Transverse colon (tissue), 4 donors: ENCODE measurements at regions of chrX and their contacts with region 1.

Region 1: DNA sequence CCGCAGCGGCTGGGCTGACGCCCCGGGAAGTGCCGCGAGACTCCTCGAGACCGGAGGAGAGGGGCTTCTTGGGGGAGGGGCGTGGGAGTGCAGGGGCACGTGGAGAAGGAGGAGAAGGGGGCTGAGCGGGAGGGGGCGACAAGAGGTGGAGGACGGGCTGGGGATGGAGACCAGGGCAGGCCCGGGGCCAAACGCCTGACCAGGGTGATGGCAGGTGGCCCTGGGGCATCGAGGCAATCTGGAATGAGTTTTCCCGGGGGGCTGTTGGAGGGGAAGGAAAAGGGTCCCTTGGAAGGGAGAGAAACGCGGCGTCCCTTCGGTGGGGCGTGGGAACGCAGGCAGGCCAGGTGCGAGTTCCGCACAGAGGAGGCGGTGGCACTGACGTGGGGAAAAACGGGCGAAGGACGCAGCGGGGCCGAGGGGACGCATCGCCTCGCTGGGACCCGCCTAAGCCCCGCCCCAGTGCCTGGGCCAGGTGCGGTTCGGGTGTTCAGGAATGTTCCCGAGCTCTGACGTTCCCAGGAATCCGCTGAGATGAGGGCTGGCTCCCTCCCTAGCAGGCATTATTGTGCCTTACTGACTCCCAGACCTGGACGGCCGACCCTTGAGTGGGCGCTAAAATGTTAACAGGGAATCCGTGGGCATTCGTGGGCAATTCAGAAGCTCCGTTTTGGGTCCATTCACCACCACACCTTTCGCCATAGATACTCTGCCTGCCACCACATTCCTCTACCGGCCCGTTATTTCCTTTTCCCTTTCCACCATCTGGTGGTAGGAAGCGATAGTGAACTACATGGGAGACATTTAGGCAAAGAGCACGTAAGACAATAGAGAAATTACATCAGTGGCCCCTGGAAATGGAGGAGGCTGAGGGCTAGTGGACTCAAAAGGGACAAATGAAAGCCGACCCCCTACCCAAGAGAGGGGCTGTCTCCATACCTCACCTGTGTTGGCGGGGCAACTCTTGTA is 795 bp upstream of the SH3KBP1 start:
- DNase-seq: peak; percentile 65
- H3K4me3 ChIP-seq: peak overlapping the region; percentile 39 to 92 (median 68)
- H3K27ac ChIP-seq: peak overlapping the region; percentile 67 to 78 (median 76)
- H3K4me1 ChIP-seq: peaks cover 0 to 4% (median 0%) of the 10 kb centered on the region in 4 donors
- H3K27me3 ChIP-seq: no peaks in the 10 kb centered on the region
- CTCF ChIP-seq: peak; percentile 43 to 73 (median 46)
- EP300 ChIP-seq: no peak
- POLR2A ChIP-seq: no peak

Region 2: GRCh38 chrX:19544693-19545305 is 343.4 kb before region 1 on chrX:
- in situ Hi-C with region 1: no loop called
- intact Hi-C with region 1: loop called (anchors 10 kb)
- DNase-seq: peak; percentile 43
- H3K4me3 ChIP-seq: no peak overlapping the region
- H3K27ac ChIP-seq: no peak overlapping the region
- H3K4me1 ChIP-seq: no peaks in the 10 kb centered on the region
- H3K27me3 ChIP-seq: no peaks in the 10 kb centered on the region
- CTCF ChIP-seq: peak; percentile 44 to 72 (median 56)
- EP300 ChIP-seq: no peak
- POLR2A ChIP-seq: no peak

Region 3: DNA sequence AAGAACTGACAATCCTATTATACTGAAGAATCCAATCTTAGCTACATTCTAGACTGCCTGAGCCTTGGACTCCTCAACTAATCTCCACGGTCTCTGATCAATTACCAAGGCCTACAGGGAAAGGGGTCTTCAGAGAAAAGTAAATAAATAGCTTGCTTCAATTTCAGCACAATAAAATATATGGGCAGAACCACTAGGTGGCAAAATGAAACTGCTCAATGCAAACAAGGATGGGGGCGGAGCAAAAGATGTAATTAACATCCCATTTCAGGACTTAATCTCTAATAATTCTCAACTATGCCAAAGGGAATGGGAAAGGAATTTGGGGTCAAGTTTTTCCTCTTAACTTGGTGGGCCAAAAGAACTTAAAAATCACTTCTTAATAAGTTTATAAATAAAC is 294.5 kb before region 1 on chrX:
- in situ Hi-C with region 1: loop called (anchors 25 kb)
- intact Hi-C with region 1: no loop called
- DNase-seq: no peak
- H3K4me3 ChIP-seq: no peak overlapping the region
- H3K27ac ChIP-seq: no peak overlapping the region
- H3K4me1 ChIP-seq: no peaks in the 10 kb centered on the region
- H3K27me3 ChIP-seq: no peaks in the 10 kb centered on the region
- CTCF ChIP-seq: peak; percentile 28 to 56 (median 34)
- EP300 ChIP-seq: no peak
- POLR2A ChIP-seq: no peak

Region 4: DNA sequence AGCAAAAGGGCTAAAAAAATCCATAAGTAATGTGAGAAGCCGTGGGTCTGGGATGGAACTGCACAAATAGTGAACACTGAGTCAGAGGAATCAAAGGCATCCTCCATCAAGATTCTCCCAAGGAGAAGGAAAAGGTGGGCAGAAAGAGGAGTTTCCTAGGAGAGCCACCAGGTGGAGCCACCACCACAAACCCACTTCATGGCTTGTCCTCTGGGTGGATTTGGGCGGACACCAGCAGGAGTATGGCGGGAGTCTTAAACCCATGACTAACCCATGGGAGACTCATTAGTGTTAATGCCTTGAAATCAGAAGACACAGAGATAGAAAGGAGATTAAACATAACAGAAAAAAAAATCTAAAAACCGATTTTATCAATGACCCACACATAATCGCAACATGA is 148.5 kb before region 1 on chrX:
- in situ Hi-C with region 1: loop called (anchors 10 to 25 kb)
- intact Hi-C with region 1: no loop called
- DNase-seq: peak; percentile 71
- H3K4me3 ChIP-seq: no peak overlapping the region
- H3K27ac ChIP-seq: no peak overlapping the region
- H3K4me1 ChIP-seq: no peaks in the 10 kb centered on the region
- H3K27me3 ChIP-seq: no peaks in the 10 kb centered on the region
- CTCF ChIP-seq: peak; percentile 54 to 73 (median 62)
- EP300 ChIP-seq: no peak
- POLR2A ChIP-seq: no peak

Region 5: GRCh38 chrX:19990556-19991349 is 102.6 kb after region 1 on chrX and contains the start of gene BCLAF3:
- in situ Hi-C with region 1: no loop called
- intact Hi-C with region 1: loop called (anchors 10 kb)
- DNase-seq: peak; percentile 92
- H3K4me3 ChIP-seq: peak within 1 kb of the TSS; percentile 54 to 87 (median 82)
- H3K27ac ChIP-seq: peak within 1 kb of the TSS; percentile 83 to 91 (median 88)
- H3K4me1 ChIP-seq: peaks cover 0 to 15% (median 3%) of the 10 kb centered on the region in 4 donors
- H3K27me3 ChIP-seq: no peaks in the 10 kb centered on the region
- CTCF ChIP-seq: peak; percentile 64 to 84 (median 73)
- EP300 ChIP-seq: no peak
- POLR2A ChIP-seq: no peak
- total RNA-seq, gene BCLAF3: 16.5 to 20.6 (median 18.1) TPM